ENCODE measurements at regions of chr14 and their contacts with region 1.

Region 1: DNA sequence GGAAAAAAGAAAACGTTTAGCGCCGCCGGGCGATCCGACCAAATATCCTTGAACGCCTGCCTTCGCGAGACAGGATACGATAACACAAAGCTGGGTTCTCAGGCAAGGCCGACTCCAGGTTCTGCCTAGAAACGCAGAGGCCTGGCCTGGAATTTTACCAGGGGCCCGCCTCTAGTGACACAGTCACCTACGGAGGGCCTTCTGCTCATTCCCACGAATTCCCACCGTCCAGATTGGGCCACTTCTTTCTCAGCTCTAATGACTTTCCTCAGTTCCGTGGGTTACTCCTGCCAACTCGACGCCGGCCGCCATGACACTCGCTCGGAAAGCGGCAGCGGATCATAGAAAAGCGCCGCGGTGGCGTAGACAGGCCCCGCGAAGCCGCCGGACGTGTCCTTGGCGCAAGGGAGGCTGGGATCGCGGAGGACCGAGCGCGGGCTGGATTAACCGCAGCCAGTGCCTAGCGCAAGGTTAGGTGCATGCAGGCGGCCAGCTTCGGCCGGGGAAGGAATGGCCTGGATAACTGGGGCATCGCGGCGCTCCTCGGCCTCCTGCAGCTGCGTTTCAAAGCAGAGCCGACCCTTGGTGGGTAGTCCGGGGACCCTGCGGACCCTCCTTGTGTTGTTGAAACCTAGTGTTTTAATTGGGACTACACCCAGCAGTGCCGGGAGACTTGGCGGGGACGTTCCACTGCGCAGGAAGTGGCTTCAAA is at the start of gene TRIP11:
- DNase-seq: peak; percentile 94 to 99 (median 97)

Region 2: GRCh38 chr14:92026548-92027190 is 13.2 kb before region 1 on chr14:
- intact Hi-C with region 1: no loop called
- DNase-seq: no peak

Region 3: DNA sequence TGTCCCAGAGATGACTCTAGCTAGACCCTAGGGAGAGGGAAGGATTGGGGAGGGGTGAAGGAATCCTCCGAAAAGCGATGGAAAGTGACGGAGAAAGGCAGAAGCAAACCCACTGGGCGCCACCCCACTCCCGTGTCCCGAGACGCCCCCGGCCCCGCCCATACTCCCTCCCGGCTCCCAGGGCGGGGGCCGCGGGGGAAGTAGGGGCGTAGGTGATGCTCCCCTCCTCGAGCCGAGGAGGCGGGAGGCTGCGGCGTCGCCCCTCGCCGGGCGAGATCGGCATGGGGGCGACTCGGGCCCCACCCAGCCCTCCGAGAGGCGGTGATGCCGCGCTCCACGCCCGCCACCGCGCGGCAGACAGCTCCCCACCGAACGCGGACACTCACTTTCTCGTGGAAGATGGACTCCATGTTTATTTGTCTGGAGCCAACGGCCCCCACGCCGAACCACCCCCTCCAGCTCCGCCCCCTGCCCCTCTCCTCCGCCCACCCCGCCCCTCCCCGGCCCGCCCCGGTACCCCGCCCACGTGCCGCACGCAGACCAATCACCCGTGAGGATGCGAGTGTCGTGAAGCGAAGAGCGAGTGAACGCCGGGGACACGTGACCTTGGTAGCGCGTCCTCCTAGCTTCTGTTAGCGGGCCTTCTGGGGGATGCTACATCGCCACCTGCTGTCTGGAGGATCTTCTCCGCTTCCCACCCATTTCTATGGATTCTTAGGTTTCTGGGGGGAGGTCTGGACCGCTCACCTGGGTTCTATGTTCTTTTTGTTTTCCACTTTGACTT is 66.5 kb after region 1 on chr14 and contains the start of gene ATXN3:
- intact Hi-C with region 1: loop called (anchors 1 kb)
- DNase-seq: peak; percentile 95 to 99 (median 99)